Naive thymus-derived CD4-positive, alpha-beta T cell (primary cell): ENCODE measurements at regions of chr15 and their contacts with region 1.

Region 1: DNA sequence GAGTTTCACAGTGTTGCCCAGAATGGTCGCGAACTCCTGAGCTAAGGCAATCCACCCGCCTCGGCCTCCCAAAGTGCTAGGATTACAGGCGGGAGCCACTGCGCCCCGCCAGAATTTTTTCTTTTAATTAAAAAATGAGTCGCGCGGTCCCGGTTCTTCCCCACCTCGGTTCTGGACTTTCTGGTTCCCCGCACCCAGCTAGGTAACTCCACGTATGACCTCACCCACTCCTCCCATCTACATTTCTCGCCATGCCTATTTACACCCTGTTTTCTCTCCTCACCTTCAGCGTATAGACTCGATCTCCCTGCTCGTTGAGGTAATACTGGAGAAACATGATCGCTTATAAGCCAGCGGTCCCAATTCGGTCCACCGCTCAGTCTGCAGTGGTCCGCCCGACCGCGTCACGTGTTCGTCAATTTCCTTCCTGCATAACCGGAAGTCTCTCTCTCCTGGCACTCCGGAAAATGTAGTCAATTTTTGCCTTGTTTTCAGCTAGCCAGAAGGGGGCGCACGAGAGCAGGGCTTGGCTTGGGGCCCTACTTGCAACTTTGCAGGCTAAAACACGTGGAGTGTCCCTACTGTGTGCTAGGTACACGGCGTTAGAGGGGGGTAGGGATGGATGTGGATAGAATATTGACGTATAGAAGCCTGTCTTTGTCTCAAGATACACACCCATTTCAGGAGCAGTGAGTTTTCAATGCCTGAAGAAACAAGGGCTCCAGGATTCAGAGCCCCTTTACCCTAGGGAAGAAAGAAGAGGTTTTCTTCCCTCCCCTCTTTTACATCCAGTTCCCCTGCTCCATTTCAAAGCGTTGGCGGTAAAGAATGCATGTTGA is at the starts of genes NOP10 and NUTM1:
- DNase-seq: peak; percentile 86 to 96 (median 90)
- ATAC-seq: peak; percentile 95
- H3K4me3 ChIP-seq: peak within 1 kb of the TSS; percentile 98
- H3K4me3 Mint-ChIP-seq: no peak within 1 kb of the TSS
- H3K27ac ChIP-seq: peak within 1 kb of the TSS; percentile 91
- H3K27ac Mint-ChIP-seq: peak within 1 kb of the TSS in 8 of 9 donors; percentile 41 to 96 (median 82)
- H3K4me1 ChIP-seq: peaks cover 9 to 13% of the 10 kb centered on the region in 2 donors
- H3K4me1 Mint-ChIP-seq: peaks cover 19 to 29% (median 24%) of the 10 kb centered on the region in 7 donors
- H3K27me3 ChIP-seq: no peaks in the 10 kb centered on the region
- H3K27me3 Mint-ChIP-seq: no peaks in the 10 kb centered on the region
- total RNA-seq, gene NOP10: 31.9 to 176 (median 75.7) TPM
- total RNA-seq, gene NUTM1: not detected

Region 2: GRCh38 chr15:34101366-34102175 is 241.4 kb before region 1 on chr15 and contains the starts of genes EMC7 and PGBD4:
- CTCF ChIA-PET with region 1: no interaction called
- POLR2A ChIA-PET with region 1: interaction called, 4 read pairs
- intact Hi-C with region 1: loop called (anchors 1 kb)
- DNase-seq: peak; percentile 98 to 99 (median 99)
- ATAC-seq: peak; percentile 99
- H3K4me3 ChIP-seq: peak within 1 kb of the TSS; percentile 66
- H3K4me3 Mint-ChIP-seq: peak within 1 kb of the TSS; percentile 91 to 100 (median 96)
- H3K27ac ChIP-seq: peak within 1 kb of the TSS; percentile 96
- H3K27ac Mint-ChIP-seq: peak within 1 kb of the TSS; percentile 97 to 100 (median 98)
- H3K4me1 ChIP-seq: peaks cover 16 to 27% of the 10 kb centered on the region in 2 donors
- H3K4me1 Mint-ChIP-seq: peaks cover 15 to 56% (median 45%) of the 10 kb centered on the region in 7 donors
- H3K27me3 ChIP-seq: no peaks in the 10 kb centered on the region
- H3K27me3 Mint-ChIP-seq: peaks cover 0 to 3% (median 0%) of the 10 kb centered on the region in 5 donors
- total RNA-seq, gene EMC7: 30.1 to 65.1 (median 36.9) TPM
- total RNA-seq, gene PGBD4: 3.2 to 6.5 (median 4.2) TPM

Region 3: DNA sequence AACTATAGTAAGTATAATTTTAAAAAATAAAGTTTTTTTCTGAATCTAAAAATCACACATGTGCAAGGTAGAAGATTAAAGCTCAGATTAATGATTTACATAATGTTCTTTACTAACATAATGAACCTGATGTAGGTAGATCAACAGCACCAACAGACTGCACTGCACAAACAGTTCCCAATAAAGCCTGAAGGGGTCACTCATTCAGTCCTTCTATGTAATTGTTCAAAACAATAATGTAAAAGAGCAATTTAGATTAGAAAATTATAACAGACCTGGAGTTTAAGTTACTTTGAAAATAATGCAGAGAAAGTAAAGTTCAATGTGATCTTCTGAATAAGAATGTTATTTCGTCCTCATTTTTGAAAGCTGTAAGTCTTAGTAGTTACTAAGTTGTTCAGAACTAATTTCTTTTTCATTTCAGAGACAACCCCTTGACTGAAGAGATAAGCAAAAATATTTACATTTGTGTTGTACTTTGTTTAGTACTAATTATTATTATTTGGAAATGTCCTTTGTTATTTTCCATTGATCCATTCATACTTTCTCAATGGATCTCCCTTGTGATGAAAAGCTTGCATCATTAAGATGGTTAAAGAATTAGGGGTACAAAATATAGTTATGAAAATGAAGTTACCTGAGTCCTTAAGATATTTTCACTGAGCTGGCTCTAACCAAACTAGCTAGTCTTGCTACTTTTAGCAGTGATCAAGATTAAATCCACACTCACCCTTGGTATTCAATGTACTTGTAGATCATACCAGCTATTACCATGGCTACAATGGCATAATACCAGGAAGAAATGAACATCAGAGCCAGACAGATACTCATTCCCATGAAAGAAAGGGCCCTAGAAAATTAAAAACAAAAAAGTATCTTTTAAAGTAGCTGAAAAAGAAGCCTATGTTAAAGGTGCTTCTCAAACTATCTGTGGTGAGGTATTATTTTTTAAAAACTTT is 101.3 kb before region 1 on chr15:
- CTCF ChIA-PET with region 1: interaction called, 8 read pairs
- POLR2A ChIA-PET with region 1: interaction called, 5 read pairs
- intact Hi-C with region 1: loop called in 1 of 2 experiments (anchors 1 kb)
- DNase-seq: peak in 7 of 9 donors; percentile 38 to 65 (median 52)
- ATAC-seq: peak; percentile 91
- H3K4me3 ChIP-seq: no peak overlapping the region
- H3K4me3 Mint-ChIP-seq: no peak overlapping the region
- H3K27ac ChIP-seq: no peak overlapping the region
- H3K27ac Mint-ChIP-seq: peak overlapping the region in 7 of 9 donors; percentile 7 to 75 (median 47)
- H3K4me1 ChIP-seq: no peaks in the 10 kb centered on the region
- H3K4me1 Mint-ChIP-seq: peaks cover 0 to 13% (median 4%) of the 10 kb centered on the region in 7 donors
- H3K27me3 ChIP-seq: no peaks in the 10 kb centered on the region
- H3K27me3 Mint-ChIP-seq: no peaks in the 10 kb centered on the region

Region 4: DNA sequence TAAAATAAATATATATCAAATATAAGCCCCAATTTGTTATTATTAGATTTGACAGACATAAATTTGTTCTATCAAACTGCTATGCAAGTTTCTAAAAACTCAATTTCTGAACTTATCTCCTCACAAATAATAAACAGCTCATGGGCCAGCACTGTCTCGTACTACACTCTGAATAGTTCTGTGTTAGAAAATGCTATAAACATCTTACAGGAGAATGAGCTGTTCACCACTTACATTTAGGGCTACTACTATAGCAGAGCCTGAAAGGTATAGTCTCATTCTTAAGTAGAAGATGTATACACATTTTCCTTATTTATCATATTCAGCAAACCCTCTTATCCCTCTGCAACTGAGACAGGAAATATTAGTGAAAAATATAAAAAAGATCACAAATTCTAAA is 18.0 kb before region 1 on chr15:
- CTCF ChIA-PET with region 1: interaction called, 30 read pairs
- POLR2A ChIA-PET with region 1: interaction called, 151 read pairs
- intact Hi-C with region 1: no loop called
- DNase-seq: no peak
- ATAC-seq: no peak
- H3K4me3 ChIP-seq: no peak overlapping the region
- H3K4me3 Mint-ChIP-seq: peak overlapping the region in 4 of 10 donors; percentile 10 to 78 (median 38)
- H3K27ac ChIP-seq: no peak overlapping the region
- H3K27ac Mint-ChIP-seq: peak overlapping the region in 5 of 9 donors; percentile 22 to 93 (median 48)
- H3K4me1 ChIP-seq: peaks cover 0 to 44% of the 10 kb centered on the region in 2 donors
- H3K4me1 Mint-ChIP-seq: peaks cover 42 to 93% (median 61%) of the 10 kb centered on the region in 7 donors
- H3K27me3 ChIP-seq: no peaks in the 10 kb centered on the region
- H3K27me3 Mint-ChIP-seq: no peaks in the 10 kb centered on the region

Region 5: DNA sequence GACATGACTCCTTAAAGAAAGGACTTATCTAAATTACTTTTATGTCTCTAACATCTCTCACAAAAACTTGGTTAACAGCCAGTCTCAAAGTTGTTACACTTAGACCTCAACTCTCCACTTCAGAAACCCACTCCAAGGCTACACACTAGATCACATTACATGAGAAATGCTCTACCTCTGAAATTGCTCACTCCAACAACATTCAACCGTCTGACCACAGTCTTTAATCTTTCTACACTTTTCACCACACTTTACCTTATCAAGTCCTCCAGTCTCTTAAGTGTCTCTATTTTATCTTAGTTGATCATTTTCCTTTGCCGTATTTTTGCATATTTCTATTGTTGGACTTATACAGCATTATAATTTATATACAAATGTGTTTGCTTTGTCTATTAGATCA is 11.1 kb before region 1 on chr15:
- CTCF ChIA-PET with region 1: interaction called, 30 read pairs
- POLR2A ChIA-PET with region 1: interaction called, 82 read pairs
- intact Hi-C with region 1: no loop called
- DNase-seq: peak in 2 of 9 donors; percentile 30 to 40
- ATAC-seq: peak; percentile 72
- H3K4me3 ChIP-seq: no peak overlapping the region
- H3K4me3 Mint-ChIP-seq: peak overlapping the region; percentile 17 to 99 (median 60)
- H3K27ac ChIP-seq: peak overlapping the region; percentile 92
- H3K27ac Mint-ChIP-seq: peak overlapping the region; percentile 77 to 98 (median 85)
- H3K4me1 ChIP-seq: peaks cover 47 to 64% of the 10 kb centered on the region in 2 donors
- H3K4me1 Mint-ChIP-seq: peaks cover 47 to 98% (median 82%) of the 10 kb centered on the region in 7 donors
- H3K27me3 ChIP-seq: no peaks in the 10 kb centered on the region
- H3K27me3 Mint-ChIP-seq: no peaks in the 10 kb centered on the region

Region 6: GRCh38 chr15:34437687-34438086 is 94.7 kb after region 1 on chr15 and contains the start of gene GOLGA8A:
- CTCF ChIA-PET with region 1: no interaction called
- POLR2A ChIA-PET with region 1: no interaction called
- intact Hi-C with region 1: loop called (anchors 1 to 10 kb)
- DNase-seq: peak in 8 of 9 donors; percentile 62 to 88 (median 82)
- ATAC-seq: peak; percentile 88
- H3K4me3 ChIP-seq: peak within 1 kb of the TSS; percentile 51
- H3K4me3 Mint-ChIP-seq: peak within 1 kb of the TSS in 9 of 10 donors; percentile 81 to 98 (median 95)
- H3K27ac ChIP-seq: peak within 1 kb of the TSS; percentile 60
- H3K27ac Mint-ChIP-seq: peak within 1 kb of the TSS in 8 of 9 donors; percentile 78 to 96 (median 94)
- H3K4me1 ChIP-seq: peaks cover 6 to 12% of the 10 kb centered on the region in 2 donors
- H3K4me1 Mint-ChIP-seq: peaks cover 3 to 32% (median 21%) of the 10 kb centered on the region in 7 donors
- H3K27me3 ChIP-seq: no peaks in the 10 kb centered on the region
- H3K27me3 Mint-ChIP-seq: peaks cover 0 to 16% (median under 1%) of the 10 kb centered on the region in 5 donors
- total RNA-seq, gene GOLGA8A: 147 to 361 (median 158) TPM